Natural killer cell (primary cell): ENCODE measurements at regions of chr10 and their contacts with region 1.

Region 1: DNA sequence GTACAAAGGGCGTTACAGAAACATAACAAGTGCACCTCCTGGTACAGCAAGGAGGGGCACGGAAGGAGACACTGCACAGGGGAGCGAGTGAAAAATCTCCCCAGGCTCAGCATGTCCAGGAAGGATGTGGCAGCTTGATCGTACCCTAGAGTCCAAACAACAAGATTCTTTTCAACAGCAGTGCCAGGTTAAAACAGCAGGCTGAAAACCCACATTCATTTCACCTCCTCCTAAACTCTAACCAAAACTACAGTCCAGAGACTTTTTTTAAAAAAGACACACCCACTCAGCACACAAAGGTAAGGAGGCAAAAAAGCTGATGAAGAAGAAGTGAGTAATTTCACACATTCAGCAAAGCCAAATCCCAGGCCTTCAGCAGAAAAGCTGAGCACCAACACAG is 138.8 kb downstream of the SFMBT2 start:
- DNase-seq: peak in 1 of 2 donors; percentile 60
- ATAC-seq: peak in 2 of 3 donors; percentile 17 to 47
- H3K4me3 ChIP-seq: no peak overlapping the region
- H3K4me3 Mint-ChIP-seq: peak overlapping the region; percentile 79
- H3K27ac ChIP-seq: peak overlapping the region; percentile 8
- H3K27ac Mint-ChIP-seq: peak overlapping the region; percentile 83 to 89
- H3K4me1 ChIP-seq: peaks cover 37% of the 10 kb centered on the region
- H3K4me1 Mint-ChIP-seq: peaks cover 60 to 79% of the 10 kb centered on the region in 2 donors
- H3K27me3 ChIP-seq: no peaks in the 10 kb centered on the region
- H3K27me3 Mint-ChIP-seq: no peaks in the 10 kb centered on the region
- CTCF ChIP-seq: no peak

Region 2: DNA sequence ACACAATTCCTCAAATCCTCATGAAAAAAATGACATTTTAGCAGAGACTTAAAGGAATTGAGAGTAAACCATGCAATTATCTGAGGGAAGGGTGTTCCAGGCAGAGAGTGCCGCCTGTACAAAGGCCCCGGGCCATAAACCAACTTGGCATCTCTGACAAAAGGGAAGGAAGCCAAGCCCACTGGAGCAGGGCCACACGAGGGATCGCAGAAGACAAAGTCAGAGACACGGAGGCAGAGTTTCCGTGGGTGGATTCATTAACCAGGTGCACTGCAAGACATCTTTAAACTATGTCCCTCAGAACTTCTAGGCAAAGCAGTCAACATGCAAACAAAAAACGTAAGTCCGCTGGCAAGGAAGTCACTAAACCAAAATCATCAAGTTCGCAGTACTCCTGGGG is 46.8 kb after region 1 on chr10:
- intact Hi-C with region 1: loop called (anchors 5 kb)
- DNase-seq: no peak
- ATAC-seq: no peak
- H3K4me3 ChIP-seq: no peak overlapping the region
- H3K4me3 Mint-ChIP-seq: peak overlapping the region; percentile 73
- H3K27ac ChIP-seq: no peak overlapping the region
- H3K27ac Mint-ChIP-seq: peak overlapping the region; percentile 28 to 44
- H3K4me1 ChIP-seq: peaks cover 31% of the 10 kb centered on the region
- H3K4me1 Mint-ChIP-seq: peaks cover 55 to 62% of the 10 kb centered on the region in 2 donors
- H3K27me3 ChIP-seq: no peaks in the 10 kb centered on the region
- H3K27me3 Mint-ChIP-seq: no peaks in the 10 kb centered on the region
- CTCF ChIP-seq: no peak